Ascending aorta (tissue), 2 donors: ENCODE measurements at regions of chr4 and their contacts with region 1.

Region 1: GRCh38 chr4:142846729-142847596 is 862 bp upstream of the INPP4B start:
- DNase-seq: peak in 1 of 2 donors; percentile 69
- H3K4me3 ChIP-seq: peak overlapping the region; percentile 77 to 78
- H3K27ac ChIP-seq: peak overlapping the region; percentile 79 to 84
- H3K4me1 ChIP-seq: peaks cover 0 to 5% of the 10 kb centered on the region in 2 donors
- H3K27me3 ChIP-seq: no peaks in the 10 kb centered on the region
- CTCF ChIP-seq: peak; percentile 5 to 53 (median 32)

Region 2: DNA sequence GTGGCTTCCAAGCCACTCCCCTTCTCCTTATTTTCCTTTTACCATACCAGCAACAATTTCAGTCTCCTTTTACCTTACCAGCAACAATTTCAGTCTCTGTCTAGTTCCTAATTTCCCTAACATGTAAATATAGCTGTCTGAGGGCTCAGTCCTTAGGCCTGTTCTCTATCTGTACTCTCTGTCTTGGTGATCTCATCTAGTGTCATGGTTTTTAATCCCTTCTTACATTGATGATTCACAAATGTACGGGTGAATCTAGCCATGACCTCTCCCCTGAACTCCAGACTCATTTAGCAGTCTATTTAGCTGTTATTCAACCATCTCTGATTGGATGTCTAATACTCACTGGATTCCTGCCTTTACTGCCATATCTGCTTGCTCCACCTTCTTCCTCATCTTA is 1203.4 kb before region 1 on chr4:
- intact Hi-C with region 1: loop called (anchors 10 kb)
- DNase-seq: no peak
- H3K4me3 ChIP-seq: no peak overlapping the region
- H3K27ac ChIP-seq: peak overlapping the region in 1 of 2 donors; percentile 31
- H3K4me1 ChIP-seq: peaks cover 0 to 12% of the 10 kb centered on the region in 2 donors
- H3K27me3 ChIP-seq: no peaks in the 10 kb centered on the region
- CTCF ChIP-seq: no peak

Region 3: DNA sequence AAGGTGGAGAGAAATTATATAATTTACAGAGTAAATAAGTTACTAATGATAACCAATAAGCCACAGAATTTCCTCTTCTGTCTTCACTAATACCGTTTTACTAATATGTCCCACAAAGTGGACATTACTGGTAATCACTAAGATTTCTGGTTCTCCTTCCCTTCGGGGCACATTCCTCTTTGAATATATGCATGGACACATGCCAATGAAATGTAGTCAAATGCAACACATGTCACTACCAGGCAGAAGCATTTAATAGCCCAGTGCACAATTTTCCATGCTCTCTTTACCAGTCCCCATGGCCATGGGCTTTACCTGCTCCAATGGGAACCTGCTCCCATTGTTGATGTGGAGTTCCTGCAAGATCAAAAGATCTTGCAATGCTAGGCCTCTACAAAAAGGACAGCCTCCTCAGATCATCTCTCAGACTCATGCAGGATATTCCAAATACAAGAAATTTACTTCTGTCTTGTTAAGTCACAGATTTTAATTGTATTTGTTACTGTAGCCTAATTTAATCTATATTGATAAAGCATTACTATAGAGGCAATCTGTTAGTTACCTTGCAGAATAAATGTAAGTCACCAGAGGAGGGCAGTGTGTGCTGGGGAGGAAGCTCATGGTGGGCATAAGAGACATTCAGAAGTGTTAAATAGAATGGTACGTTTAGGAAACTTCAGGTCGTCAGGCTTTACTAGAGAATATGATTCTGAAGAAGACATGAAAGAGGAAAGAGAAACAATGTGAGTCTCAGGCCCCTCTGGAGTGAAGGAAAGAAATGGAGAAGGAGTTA is 36.3 kb after region 1 on chr4:
- intact Hi-C with region 1: no loop called
- DNase-seq: no peak
- H3K4me3 ChIP-seq: no peak overlapping the region
- H3K27ac ChIP-seq: no peak overlapping the region
- H3K4me1 ChIP-seq: no peaks in the 10 kb centered on the region
- H3K27me3 ChIP-seq: no peaks in the 10 kb centered on the region
- CTCF ChIP-seq: peak in 1 of 3 experiments; percentile 30

Region 4: GRCh38 chr4:143230683-143231082 is 383.7 kb after region 1 on chr4:
- intact Hi-C with region 1: no loop called
- DNase-seq: no peak
- H3K4me3 ChIP-seq: no peak overlapping the region
- H3K27ac ChIP-seq: no peak overlapping the region
- H3K4me1 ChIP-seq: no peaks in the 10 kb centered on the region
- H3K27me3 ChIP-seq: no peaks in the 10 kb centered on the region
- CTCF ChIP-seq: no peak